ENCODE measurements at regions of chr21 and their contacts with region 1.

Region 1: DNA sequence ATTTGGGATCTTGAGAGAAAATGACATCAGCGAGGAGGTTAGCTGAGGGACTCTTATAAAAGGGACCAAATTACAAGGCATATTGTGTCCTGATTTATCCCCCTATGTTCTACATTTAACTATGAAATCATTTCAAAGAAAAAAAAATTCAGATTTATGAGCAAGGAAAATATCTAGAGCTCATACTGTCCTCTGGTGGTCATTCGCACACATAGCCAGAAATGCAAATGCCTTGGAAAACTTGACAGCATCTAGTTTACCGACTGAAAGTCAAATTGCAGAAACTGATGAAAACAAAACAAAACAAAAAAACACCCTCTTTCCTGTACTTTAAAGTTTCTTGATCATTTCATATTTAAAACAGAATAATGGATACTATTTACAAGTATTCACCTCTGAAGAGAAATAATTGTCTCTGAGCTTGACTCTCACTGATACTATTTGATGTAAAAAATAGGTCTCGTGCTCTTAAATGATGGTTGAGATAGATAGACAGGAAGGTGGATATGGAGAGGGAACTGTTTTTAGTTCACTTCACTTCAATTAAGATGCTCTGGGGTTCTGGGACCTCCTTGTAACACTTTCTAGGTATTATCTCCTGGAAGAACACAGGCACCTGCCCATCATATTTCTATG is 253.8 kb downstream of the PCP4 start:
- DNase-seq: no peak
- H3K4me3 ChIP-seq: no peak overlapping the region
- H3K27ac ChIP-seq: no peak overlapping the region
- H3K4me1 ChIP-seq: no peaks in the 10 kb centered on the region
- H3K27me3 ChIP-seq: no peaks in the 10 kb centered on the region
- CTCF ChIP-seq: peak; percentile 81

Region 2: GRCh38 chr21:39788383-39788782 is 332.7 kb before region 1 on chr21:
- intact Hi-C with region 1: loop called (anchors 10 kb)
- DNase-seq: peak; percentile 72
- H3K4me3 ChIP-seq: peak overlapping the region; percentile 55
- H3K27ac ChIP-seq: peak overlapping the region; percentile 27
- H3K4me1 ChIP-seq: no peaks in the 10 kb centered on the region
- H3K27me3 ChIP-seq: no peaks in the 10 kb centered on the region
- CTCF ChIP-seq: peak; percentile 84

Region 3: DNA sequence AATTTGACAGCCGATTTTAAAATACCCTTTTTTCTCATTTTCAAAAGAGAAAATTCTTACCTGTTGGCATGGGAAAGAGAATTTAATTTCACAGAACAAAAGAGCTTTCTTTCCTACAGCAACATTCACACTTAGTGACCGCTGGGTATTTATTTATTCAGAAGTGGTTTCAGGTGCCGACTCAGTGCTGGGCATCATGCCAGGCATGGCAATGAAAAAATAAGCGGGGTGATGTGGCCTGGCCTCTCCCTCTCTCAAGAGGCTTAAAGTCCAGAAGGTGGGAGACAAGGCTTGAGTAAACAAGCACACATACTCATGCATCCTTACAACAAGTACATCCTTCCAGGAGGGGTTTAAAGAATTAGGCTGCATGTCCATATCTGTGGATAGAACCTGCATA is 257.9 kb before region 1 on chr21:
- intact Hi-C with region 1: loop called (anchors 5 kb)
- DNase-seq: no peak
- H3K4me3 ChIP-seq: no peak overlapping the region
- H3K27ac ChIP-seq: no peak overlapping the region
- H3K4me1 ChIP-seq: no peaks in the 10 kb centered on the region
- H3K27me3 ChIP-seq: peaks cover 8% of the 10 kb centered on the region
- CTCF ChIP-seq: no peak